ENCODE measurements at regions of chr4 and their contacts with region 1.

Region 1: DNA sequence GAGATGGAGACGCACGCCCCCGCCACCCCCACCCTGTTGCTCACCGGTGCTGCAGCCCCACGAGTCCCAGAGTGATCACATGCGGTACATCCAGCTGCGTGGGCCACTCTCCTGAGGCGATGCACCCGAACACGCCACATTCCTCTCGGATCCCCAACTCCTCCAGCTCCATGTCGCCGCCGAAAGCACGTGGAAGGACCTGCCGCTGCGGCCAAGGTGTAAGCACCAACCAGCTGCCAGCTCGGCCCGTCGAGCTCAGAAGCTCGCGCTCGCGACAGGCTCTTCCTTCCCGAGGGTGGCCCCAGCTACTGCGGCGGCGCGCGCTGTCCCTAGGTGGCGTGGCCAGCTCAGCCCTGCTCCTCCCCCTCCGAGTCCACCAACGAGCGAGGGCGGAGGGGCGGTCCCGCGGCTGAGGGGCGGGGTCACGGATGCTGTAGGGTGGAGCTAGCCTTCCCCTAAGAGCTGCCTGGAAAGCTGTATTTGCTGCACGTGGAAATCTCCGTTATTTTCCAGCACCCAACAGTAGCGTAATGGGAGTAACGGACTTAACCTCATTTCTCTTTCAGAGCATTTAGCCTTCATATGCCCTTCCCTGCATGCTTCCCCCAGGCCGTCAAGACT is at the start of gene PPAT:
- DNase-seq: peak; percentile 99
- H3K4me3 Mint-ChIP-seq: peak within 1 kb of the TSS; percentile 98
- H3K27ac Mint-ChIP-seq: peak within 1 kb of the TSS; percentile 96
- H3K4me1 Mint-ChIP-seq: peaks cover 50% of the 10 kb centered on the region
- H3K27me3 Mint-ChIP-seq: no peaks in the 10 kb centered on the region
- total RNA-seq, gene PPAT: 35.2 to 40.6 TPM

Region 2: GRCh38 chr4:55395529-55396307 is 1039.7 kb before region 1 on chr4 and contains the start of gene TMEM165:
- CTCF ChIA-PET with region 1: interaction called, 3 read pairs
- intact Hi-C with region 1: loop called (anchors 5 kb)
- DNase-seq: peak; percentile 92
- H3K4me3 Mint-ChIP-seq: peak within 1 kb of the TSS; percentile 96
- H3K27ac Mint-ChIP-seq: peak within 1 kb of the TSS; percentile 89
- H3K4me1 Mint-ChIP-seq: peaks cover 39% of the 10 kb centered on the region
- H3K27me3 Mint-ChIP-seq: no peaks in the 10 kb centered on the region
- total RNA-seq, gene TMEM165: 39.1 to 40.6 TPM

Region 3: GRCh38 chr4:56255820-56256219 is 179.6 kb before region 1 on chr4:
- CTCF ChIA-PET with region 1: no interaction called
- intact Hi-C with region 1: no loop called
- DNase-seq: no peak
- H3K4me3 Mint-ChIP-seq: no peak overlapping the region
- H3K27ac Mint-ChIP-seq: no peak overlapping the region
- H3K4me1 Mint-ChIP-seq: peaks cover 5% of the 10 kb centered on the region
- H3K27me3 Mint-ChIP-seq: peaks cover 14% of the 10 kb centered on the region

Region 4: GRCh38 chr4:56424697-56425514 is 10.5 kb before region 1 on chr4:
- CTCF ChIA-PET with region 1: interaction called, 12 read pairs
- intact Hi-C with region 1: no loop called
- DNase-seq: peak; percentile 51
- H3K4me3 Mint-ChIP-seq: no peak overlapping the region
- H3K27ac Mint-ChIP-seq: no peak overlapping the region
- H3K4me1 Mint-ChIP-seq: peaks cover 23% of the 10 kb centered on the region
- H3K27me3 Mint-ChIP-seq: no peaks in the 10 kb centered on the region

Region 5: DNA sequence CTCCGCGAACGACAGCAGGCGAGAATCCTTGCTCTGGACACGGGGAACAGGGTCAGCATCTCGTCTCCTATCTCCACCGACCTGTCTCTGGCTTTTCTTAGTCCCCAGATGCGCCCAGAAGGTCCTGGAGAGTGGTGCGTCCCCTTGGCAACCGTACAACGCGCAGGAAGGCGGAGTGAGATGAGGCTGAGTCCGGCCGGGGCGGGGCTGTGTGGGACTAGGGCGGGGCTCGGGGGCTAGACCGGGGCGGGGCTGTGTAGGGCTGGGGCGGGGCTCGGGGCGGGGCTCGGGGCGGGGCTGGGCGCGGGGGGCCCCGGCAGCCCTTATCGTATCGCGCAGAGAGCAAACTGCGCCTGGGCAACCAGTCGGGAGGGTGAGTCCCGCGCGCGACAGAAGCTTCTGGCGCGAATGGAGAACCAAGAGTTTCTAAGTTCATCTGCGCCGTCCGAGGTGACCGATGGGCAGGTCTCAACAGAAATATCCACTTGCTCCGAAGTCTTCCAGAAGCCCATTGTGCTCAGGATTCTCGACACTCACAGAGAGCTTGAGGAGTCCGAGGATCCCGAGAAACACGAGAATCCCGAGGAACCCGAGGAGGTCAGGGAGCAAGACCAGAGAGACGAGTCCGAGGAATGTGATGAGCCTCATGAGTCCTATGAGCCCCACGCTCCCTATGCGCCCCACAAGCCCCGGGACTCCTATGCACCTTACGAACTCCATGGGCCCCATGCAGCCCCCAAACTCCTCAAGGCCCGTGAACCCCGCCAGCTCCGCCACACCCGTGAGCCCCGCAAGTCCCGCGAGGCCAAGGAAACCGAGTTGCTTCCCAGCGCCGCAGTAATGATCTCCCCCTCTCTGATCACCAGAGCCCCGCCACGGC is 95.1 kb after region 1 on chr4:
- CTCF ChIA-PET with region 1: no interaction called
- intact Hi-C with region 1: loop called (anchors 1 kb)
- DNase-seq: peak; percentile 88
- H3K4me3 Mint-ChIP-seq: peak overlapping the region; percentile 58
- H3K27ac Mint-ChIP-seq: no peak overlapping the region
- H3K4me1 Mint-ChIP-seq: peaks cover 1% of the 10 kb centered on the region
- H3K27me3 Mint-ChIP-seq: peaks cover 4% of the 10 kb centered on the region

Region 6: GRCh38 chr4:56757821-56758411 is 322.5 kb after region 1 on chr4:
- CTCF ChIA-PET with region 1: no interaction called
- intact Hi-C with region 1: loop called (anchors 2 kb)
- DNase-seq: peak; percentile 92
- H3K4me3 Mint-ChIP-seq: peak overlapping the region; percentile 57
- H3K27ac Mint-ChIP-seq: peak overlapping the region; percentile 89
- H3K4me1 Mint-ChIP-seq: peaks cover 26% of the 10 kb centered on the region
- H3K27me3 Mint-ChIP-seq: no peaks in the 10 kb centered on the region

Region 7: DNA sequence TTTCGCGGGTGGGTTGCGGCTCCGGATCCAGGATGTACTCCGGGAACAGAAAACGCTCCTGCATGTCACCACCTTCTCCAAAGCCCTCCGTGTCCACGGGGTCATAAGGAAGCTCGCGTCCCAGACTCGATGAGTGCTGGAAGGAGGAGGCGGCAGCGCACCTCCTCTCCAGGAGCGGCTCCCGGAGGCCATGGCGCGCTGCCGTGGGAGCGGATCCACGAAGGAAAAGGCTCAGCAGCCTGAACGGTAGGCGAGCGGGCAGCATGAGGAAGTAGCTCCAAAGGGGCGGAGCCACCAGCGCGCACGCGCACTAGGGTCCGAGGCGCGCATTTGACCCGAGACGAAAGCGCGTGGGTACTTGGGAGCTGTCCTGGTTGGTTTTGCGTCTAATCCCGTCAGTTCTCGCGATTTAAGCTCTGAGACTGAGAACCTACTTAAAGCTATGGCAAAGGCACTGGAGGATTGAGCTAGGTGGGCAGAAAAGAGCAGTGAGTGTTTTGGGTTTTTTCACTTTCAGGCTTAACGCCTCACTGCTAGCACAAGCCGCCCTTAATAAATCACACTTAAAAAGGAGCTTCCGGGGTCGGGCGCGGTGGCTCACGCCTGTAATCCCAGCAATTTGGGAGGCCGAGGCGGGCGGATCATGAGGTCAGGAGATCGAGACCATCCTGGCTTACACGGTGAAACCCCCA is 542.1 kb after region 1 on chr4 and contains the start of gene NOA1:
- CTCF ChIA-PET with region 1: interaction called, 4 read pairs
- intact Hi-C with region 1: loop called (anchors 1 kb)
- DNase-seq: peak; percentile 98
- H3K4me3 Mint-ChIP-seq: peak within 1 kb of the TSS; percentile 100
- H3K27ac Mint-ChIP-seq: peak within 1 kb of the TSS; percentile 99
- H3K4me1 Mint-ChIP-seq: peaks cover 51% of the 10 kb centered on the region
- H3K27me3 Mint-ChIP-seq: no peaks in the 10 kb centered on the region
- total RNA-seq, gene NOA1: 25.4 to 26.0 TPM